GM13977 (cell line): ENCODE measurements at regions of chr10 and their contacts with region 1.

Region 1: GRCh38 chr10:83871187-83872081 is 267.9 kb upstream of the GHITM start:
- DNase-seq: peak; percentile 60
- CTCF ChIP-seq: peak; percentile 96

Region 2: DNA sequence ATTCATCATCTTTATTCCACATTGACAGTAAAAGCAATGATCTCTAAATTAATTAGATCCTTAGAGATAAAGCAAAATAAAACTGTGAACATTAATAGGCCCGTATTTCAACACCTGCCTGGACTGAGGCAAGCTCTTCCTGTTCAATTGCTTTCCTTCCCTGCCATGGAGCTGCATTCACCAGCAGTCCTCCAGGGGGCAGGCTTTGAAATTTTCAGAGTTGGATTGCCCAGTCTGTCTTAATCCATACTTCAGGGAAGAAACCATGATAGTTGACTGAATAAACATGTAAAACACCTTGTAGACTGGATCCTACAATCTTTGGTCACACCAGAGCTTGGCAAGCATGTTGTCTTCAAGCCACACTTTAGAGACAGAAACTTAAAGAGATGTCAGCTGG is 1059.8 kb before region 1 on chr10:
- in situ Hi-C with region 1: loop called (anchors 25 kb)
- DNase-seq: no peak
- CTCF ChIP-seq: peak; percentile 65